Activated CD4-positive, alpha-beta T cell treated with anti-CD3 and anti-CD28 coated beads for 36 hours (primary cell): ENCODE measurements at regions of chr19 and their contacts with region 1.

Region 1: GRCh38 chr19:7177926-7178325 is 108.4 kb downstream of the ZNF557 start:
- DNase-seq: no peak
- ATAC-seq: no peak
- H3K4me3 Mint-ChIP-seq: no peak overlapping the region
- H3K27ac Mint-ChIP-seq: no peak overlapping the region
- H3K4me1 Mint-ChIP-seq: peaks cover 18% of the 10 kb centered on the region
- H3K27me3 Mint-ChIP-seq: peaks cover 12% of the 10 kb centered on the region

Region 2: GRCh38 chr19:7191946-7192691 is 14.2 kb after region 1 on chr19:
- CTCF ChIA-PET with region 1: no interaction called
- POLR2A ChIA-PET with region 1: no interaction called
- intact Hi-C with region 1: loop called in 1 of 2 experiments (anchors 2 kb)
- DNase-seq: peak; percentile 68
- ATAC-seq: peak; percentile 63
- H3K4me3 Mint-ChIP-seq: peak overlapping the region; percentile 32
- H3K27ac Mint-ChIP-seq: peak overlapping the region; percentile 19
- H3K4me1 Mint-ChIP-seq: peaks cover 23% of the 10 kb centered on the region
- H3K27me3 Mint-ChIP-seq: peaks cover 13% of the 10 kb centered on the region

Region 3: DNA sequence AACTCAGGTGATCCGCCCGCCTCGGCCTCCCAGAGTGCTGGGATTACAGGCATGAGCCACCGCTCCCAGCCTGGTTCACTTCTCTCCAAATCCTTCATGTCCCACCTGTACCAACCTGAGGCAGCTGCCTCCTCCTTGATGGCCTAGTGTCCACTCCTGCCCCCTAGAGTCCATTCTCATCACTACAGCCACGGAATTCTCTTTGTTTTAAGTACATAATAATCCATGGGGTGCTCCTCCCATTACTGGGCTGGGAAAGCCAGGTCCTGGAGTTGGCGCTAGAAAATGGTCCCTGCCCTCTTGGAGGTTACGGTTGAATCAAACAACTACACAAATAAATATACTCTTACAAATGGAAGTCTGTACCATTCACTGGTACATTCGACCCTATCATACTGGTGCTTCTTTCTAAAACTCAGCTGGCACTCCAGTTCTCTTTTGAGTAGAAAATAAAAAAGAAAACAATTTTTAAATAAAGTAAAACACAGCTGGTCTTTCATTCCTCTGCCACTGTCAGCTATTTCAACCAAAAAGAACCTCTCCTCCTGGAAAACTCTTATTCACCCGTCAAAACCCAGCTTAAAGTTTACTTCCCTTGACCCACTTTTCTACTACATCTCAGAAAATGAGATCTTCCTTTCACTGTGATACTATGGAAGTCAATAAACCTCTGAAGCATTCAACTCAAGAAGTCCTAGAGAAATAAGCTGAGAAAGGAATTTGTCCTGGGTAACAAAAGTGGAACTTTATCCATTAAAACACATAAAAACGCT is 148.4 kb after region 1 on chr19:
- CTCF ChIA-PET with region 1: no interaction called
- POLR2A ChIA-PET with region 1: no interaction called
- intact Hi-C with region 1: no loop called
- DNase-seq: peak; percentile 71
- ATAC-seq: no peak
- H3K4me3 Mint-ChIP-seq: no peak overlapping the region
- H3K27ac Mint-ChIP-seq: no peak overlapping the region
- H3K4me1 Mint-ChIP-seq: no peaks in the 10 kb centered on the region
- H3K27me3 Mint-ChIP-seq: no peaks in the 10 kb centered on the region

Region 4: GRCh38 chr19:7373862-7374261 is 195.9 kb after region 1 on chr19:
- CTCF ChIA-PET with region 1: no interaction called
- POLR2A ChIA-PET with region 1: no interaction called
- intact Hi-C with region 1: no loop called
- DNase-seq: peak; percentile 54
- ATAC-seq: peak; percentile 73
- H3K4me3 Mint-ChIP-seq: no peak overlapping the region
- H3K27ac Mint-ChIP-seq: no peak overlapping the region
- H3K4me1 Mint-ChIP-seq: peaks cover under 1% of the 10 kb centered on the region
- H3K27me3 Mint-ChIP-seq: no peaks in the 10 kb centered on the region